Activated CD8-positive, alpha-beta T cell treated with anti-CD3 and anti-CD28 coated beads for 36 hours (primary cell): ENCODE measurements at regions of chr1 and their contacts with region 1.

Region 1: DNA sequence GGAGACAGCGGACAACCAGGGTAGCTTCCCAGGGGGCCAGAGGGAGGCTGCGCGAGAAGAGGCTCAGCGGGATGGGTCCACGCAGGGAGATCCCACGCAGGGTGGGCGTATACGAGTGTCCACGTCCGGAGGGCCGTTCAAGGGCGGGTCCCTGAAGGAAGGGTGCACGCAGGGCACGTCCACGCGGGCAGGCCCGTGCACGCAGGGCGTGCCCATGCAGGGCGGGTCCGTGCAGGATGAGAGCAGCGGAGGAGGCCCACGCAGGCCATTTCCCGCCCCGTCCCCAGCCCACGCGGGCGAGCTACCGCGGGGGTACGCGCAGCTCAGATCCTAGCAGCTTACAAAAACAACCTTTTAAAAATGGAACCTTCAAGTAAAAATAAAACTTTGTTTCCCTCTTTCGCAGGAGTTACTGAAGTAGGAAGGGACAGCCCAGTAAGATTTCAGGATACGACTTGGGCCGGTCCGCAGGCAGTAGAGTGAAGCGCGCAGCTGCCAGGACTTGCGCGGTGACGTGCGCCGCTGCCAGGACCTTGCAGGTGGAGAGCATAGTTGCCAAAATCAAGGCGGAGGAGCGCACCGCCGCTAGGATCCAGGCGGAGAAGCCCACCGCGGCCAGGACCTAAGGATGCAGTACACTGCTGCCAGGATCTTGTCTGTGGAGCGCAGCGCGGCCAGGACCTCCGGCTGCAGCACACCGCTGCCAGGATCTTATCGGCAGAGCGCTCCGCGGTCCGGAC is 416 bp upstream of the RNF187 start:
- DNase-seq: peak; percentile 83
- ATAC-seq: peak; percentile 75
- H3K4me3 Mint-ChIP-seq: peak overlapping the region; percentile 96
- H3K27ac Mint-ChIP-seq: peak overlapping the region; percentile 99
- H3K4me1 Mint-ChIP-seq: peaks cover 44% of the 10 kb centered on the region
- H3K27me3 Mint-ChIP-seq: no peaks in the 10 kb centered on the region
- CTCF ChIP-seq: no peak

Region 2: GRCh38 chr1:228457396-228458176 is 29.2 kb before region 1 on chr1:
- CTCF ChIA-PET with region 1: interaction called, 26 read pairs
- POLR2A ChIA-PET with region 1: interaction called, 16 read pairs
- intact Hi-C with region 1: no loop called
- DNase-seq: peak; percentile 94
- ATAC-seq: peak; percentile 88
- H3K4me3 Mint-ChIP-seq: peak overlapping the region; percentile 98
- H3K27ac Mint-ChIP-seq: peak overlapping the region; percentile 98
- H3K4me1 Mint-ChIP-seq: peaks cover 24% of the 10 kb centered on the region
- H3K27me3 Mint-ChIP-seq: peaks cover 2% of the 10 kb centered on the region
- CTCF ChIP-seq: peak; percentile 32

Region 3: DNA sequence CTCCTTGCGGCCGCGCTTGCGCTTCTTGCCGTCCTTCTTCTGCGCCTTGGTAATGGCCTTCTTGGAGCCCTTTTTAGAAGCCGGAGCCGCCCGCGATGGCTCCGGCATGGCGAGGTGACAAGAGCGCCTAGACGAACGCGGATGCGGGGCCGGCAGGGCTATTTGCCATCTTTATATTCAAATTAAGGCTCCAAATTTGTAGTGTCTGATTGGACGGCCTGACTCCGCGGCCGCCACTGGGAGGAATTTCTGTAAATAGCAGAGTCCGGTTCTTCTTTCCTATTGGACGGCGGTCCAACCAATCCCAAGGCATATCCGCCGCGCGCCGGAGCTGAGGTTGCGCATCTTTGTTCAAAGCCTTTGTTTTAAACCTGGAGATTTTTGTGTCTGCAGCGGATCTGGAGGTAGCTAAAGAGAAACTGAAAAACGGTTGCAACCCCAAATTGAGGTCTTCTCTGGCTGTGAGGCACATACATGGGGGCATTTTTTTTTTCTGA is 22.2 kb before region 1 on chr1:
- CTCF ChIA-PET with region 1: interaction called, 26 read pairs
- POLR2A ChIA-PET with region 1: interaction called, 8 read pairs
- intact Hi-C with region 1: no loop called
- DNase-seq: peak; percentile 96
- ATAC-seq: peak; percentile 83
- H3K4me3 Mint-ChIP-seq: peak overlapping the region; percentile 89
- H3K27ac Mint-ChIP-seq: peak overlapping the region; percentile 91
- H3K4me1 Mint-ChIP-seq: peaks cover 37% of the 10 kb centered on the region
- H3K27me3 Mint-ChIP-seq: peaks cover 7% of the 10 kb centered on the region
- CTCF ChIP-seq: no peak

Region 4: DNA sequence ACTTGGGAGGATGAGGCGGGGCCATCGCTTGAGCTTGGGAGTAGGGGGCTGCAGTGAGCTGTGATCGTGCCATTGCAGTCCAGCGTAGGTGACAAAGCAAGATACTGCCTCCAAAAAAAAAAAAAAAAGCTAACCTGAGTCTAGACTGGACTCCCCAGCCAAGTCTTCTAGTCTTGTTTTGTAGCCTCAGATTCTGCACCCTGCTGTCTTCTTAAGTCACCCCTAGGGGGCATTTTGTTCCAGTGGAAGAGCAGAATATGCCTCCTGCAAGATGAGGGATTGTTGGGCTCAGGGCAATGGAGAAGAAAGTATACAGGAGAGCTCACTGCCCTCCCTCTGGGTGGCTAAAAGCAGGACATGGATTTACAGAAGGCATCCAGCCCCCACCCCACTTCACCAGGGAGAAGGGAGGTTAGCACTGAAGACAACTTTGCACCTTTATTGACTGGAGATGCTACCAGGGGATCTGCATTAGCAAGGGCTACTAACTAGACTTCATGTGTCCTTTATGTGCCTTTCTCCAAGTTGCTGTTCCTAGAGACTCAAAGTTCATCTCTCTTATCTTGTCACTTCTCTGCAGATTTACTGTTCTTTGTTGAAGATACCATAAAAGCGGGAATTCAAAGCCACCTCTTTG is 14.9 kb before region 1 on chr1:
- CTCF ChIA-PET with region 1: interaction called, 17 read pairs
- POLR2A ChIA-PET with region 1: interaction called, 15 read pairs
- intact Hi-C with region 1: no loop called
- DNase-seq: peak; percentile 45
- ATAC-seq: peak; percentile 81
- H3K4me3 Mint-ChIP-seq: no peak overlapping the region
- H3K27ac Mint-ChIP-seq: peak overlapping the region; percentile 47
- H3K4me1 Mint-ChIP-seq: peaks cover 24% of the 10 kb centered on the region
- H3K27me3 Mint-ChIP-seq: peaks cover 14% of the 10 kb centered on the region
- CTCF ChIP-seq: peak; percentile 71

Region 5: GRCh38 chr1:228500901-228501871 is 14.4 kb after region 1 on chr1:
- CTCF ChIA-PET with region 1: interaction called, 22 read pairs
- POLR2A ChIA-PET with region 1: interaction called, 30 read pairs
- intact Hi-C with region 1: no loop called
- DNase-seq: peak; percentile 98
- ATAC-seq: peak; percentile 97
- H3K4me3 Mint-ChIP-seq: peak overlapping the region; percentile 60
- H3K27ac Mint-ChIP-seq: peak overlapping the region; percentile 66
- H3K4me1 Mint-ChIP-seq: peaks cover 24% of the 10 kb centered on the region
- H3K27me3 Mint-ChIP-seq: peaks cover 2% of the 10 kb centered on the region
- CTCF ChIP-seq: peak; percentile 87